ENCODE measurements at regions of chr12 and their contacts with region 1.

Region 1: GRCh38 chr12:41055875-41056577 is 132.1 kb upstream of the PDZRN4 start:
- DNase-seq: no peak
- H3K4me3 Mint-ChIP-seq: no peak overlapping the region
- H3K27ac Mint-ChIP-seq: no peak overlapping the region
- H3K4me1 Mint-ChIP-seq: no peaks in the 10 kb centered on the region
- H3K27me3 Mint-ChIP-seq: no peaks in the 10 kb centered on the region

Region 2: GRCh38 chr12:41067941-41068645 is 12.1 kb after region 1 on chr12:
- CTCF ChIA-PET with region 1: no interaction called
- intact Hi-C with region 1: no loop called
- DNase-seq: no peak
- H3K4me3 Mint-ChIP-seq: no peak overlapping the region
- H3K27ac Mint-ChIP-seq: no peak overlapping the region
- H3K4me1 Mint-ChIP-seq: no peaks in the 10 kb centered on the region
- H3K27me3 Mint-ChIP-seq: no peaks in the 10 kb centered on the region

Region 3: DNA sequence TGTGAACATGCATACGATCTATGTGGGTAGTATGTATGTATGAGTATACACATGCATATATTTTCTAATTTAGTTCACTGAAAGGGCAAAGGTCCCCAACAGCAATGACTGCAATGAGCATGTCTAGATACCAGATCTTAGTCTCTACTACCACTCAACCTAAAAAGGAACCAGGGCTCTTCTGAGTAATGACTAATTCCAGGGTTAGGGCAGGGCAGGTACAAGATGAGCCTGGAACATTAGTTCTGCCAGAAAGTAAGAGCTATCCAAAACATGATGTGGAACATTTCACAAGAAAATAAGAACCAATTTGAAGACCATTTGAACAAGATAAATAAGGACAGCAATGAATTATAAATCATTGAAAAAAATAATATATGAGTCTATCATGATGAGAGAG is 40.8 kb after region 1 on chr12:
- CTCF ChIA-PET with region 1: interaction called, 3 read pairs
- intact Hi-C with region 1: loop called (anchors 1 kb)
- DNase-seq: no peak
- H3K4me3 Mint-ChIP-seq: no peak overlapping the region
- H3K27ac Mint-ChIP-seq: no peak overlapping the region
- H3K4me1 Mint-ChIP-seq: no peaks in the 10 kb centered on the region
- H3K27me3 Mint-ChIP-seq: no peaks in the 10 kb centered on the region